MCF 10A (cell line): ENCODE measurements at regions of chr16 and their contacts with region 1.

Region 1: GRCh38 chr16:28549390-28549789 is 4.3 kb upstream of the SGF29 start:
- DNase-seq: peak; percentile 61
- H3K4me3 Mint-ChIP-seq: no peak overlapping the region
- H3K27ac Mint-ChIP-seq: no peak overlapping the region
- H3K4me1 Mint-ChIP-seq: peaks cover 5% of the 10 kb centered on the region
- H3K27me3 Mint-ChIP-seq: no peaks in the 10 kb centered on the region
- CTCF ChIP-seq: peak; percentile 70

Region 2: GRCh38 chr16:28491970-28492474 is 57.4 kb before region 1 on chr16 and contains the start of gene CLN3:
- CTCF ChIA-PET with region 1: interaction called, 7 read pairs
- POLR2A ChIA-PET with region 1: interaction called, 10 read pairs
- intact Hi-C with region 1: no loop called
- DNase-seq: peak; percentile 94
- H3K4me3 Mint-ChIP-seq: peak within 1 kb of the TSS; percentile 91
- H3K27ac Mint-ChIP-seq: peak within 1 kb of the TSS; percentile 100
- H3K4me1 Mint-ChIP-seq: no peaks in the 10 kb centered on the region
- H3K27me3 Mint-ChIP-seq: peaks cover 13% of the 10 kb centered on the region
- CTCF ChIP-seq: no peak
- total RNA-seq, gene CLN3: 18.1 and 19.7 TPM in 2 replicates

Region 3: GRCh38 chr16:28538733-28539596 is 10.4 kb before region 1 on chr16 and contains the start of gene NUPR1:
- CTCF ChIA-PET with region 1: interaction called, 14 read pairs
- POLR2A ChIA-PET with region 1: interaction called, 9 read pairs
- intact Hi-C with region 1: no loop called
- DNase-seq: peak; percentile 99
- H3K4me3 Mint-ChIP-seq: peak within 1 kb of the TSS; percentile 79
- H3K27ac Mint-ChIP-seq: peak within 1 kb of the TSS; percentile 96
- H3K4me1 Mint-ChIP-seq: peaks cover 39% of the 10 kb centered on the region
- H3K27me3 Mint-ChIP-seq: no peaks in the 10 kb centered on the region
- CTCF ChIP-seq: no peak
- total RNA-seq, gene NUPR1: 291 and 345 TPM in 2 replicates

Region 4: DNA sequence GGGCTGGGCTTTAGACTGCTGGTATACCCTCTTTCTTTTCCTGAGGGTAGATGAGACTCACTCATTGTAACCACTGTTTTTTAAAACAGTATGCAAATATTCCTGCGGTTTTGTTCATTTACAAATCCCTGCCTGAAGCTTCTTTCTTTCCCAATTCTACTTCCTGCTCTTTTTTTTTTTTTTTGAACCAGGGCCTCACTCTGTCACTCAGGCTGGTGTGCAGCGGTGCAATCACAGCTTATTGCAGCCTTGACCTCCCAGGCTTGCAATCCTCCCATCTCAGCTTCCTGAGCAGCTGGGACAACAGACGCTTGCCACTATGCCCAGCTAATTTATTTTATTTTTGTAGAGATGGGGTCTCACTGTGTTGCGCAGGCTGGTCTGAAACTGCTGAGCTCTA is 68.5 kb after region 1 on chr16:
- CTCF ChIA-PET with region 1: no interaction called
- POLR2A ChIA-PET with region 1: no interaction called
- intact Hi-C with region 1: loop called (anchors 5 kb)
- DNase-seq: peak; percentile 44
- H3K4me3 Mint-ChIP-seq: no peak overlapping the region
- H3K27ac Mint-ChIP-seq: no peak overlapping the region
- H3K4me1 Mint-ChIP-seq: peaks cover 6% of the 10 kb centered on the region
- H3K27me3 Mint-ChIP-seq: no peaks in the 10 kb centered on the region
- CTCF ChIP-seq: no peak

Region 5: GRCh38 chr16:28859326-28859725 is 309.9 kb after region 1 on chr16:
- CTCF ChIA-PET with region 1: no interaction called
- POLR2A ChIA-PET with region 1: no interaction called
- intact Hi-C with region 1: no loop called
- DNase-seq: no peak
- H3K4me3 Mint-ChIP-seq: no peak overlapping the region
- H3K27ac Mint-ChIP-seq: no peak overlapping the region
- H3K4me1 Mint-ChIP-seq: peaks cover 3% of the 10 kb centered on the region
- H3K27me3 Mint-ChIP-seq: no peaks in the 10 kb centered on the region
- CTCF ChIP-seq: no peak

Region 6: GRCh38 chr16:28879841-28880588 is 330.6 kb after region 1 on chr16:
- CTCF ChIA-PET with region 1: no interaction called
- POLR2A ChIA-PET with region 1: no interaction called
- intact Hi-C with region 1: loop called (anchors 5 kb)
- DNase-seq: peak; percentile 82
- H3K4me3 Mint-ChIP-seq: peak overlapping the region; percentile 79
- H3K27ac Mint-ChIP-seq: no peak overlapping the region
- H3K4me1 Mint-ChIP-seq: no peaks in the 10 kb centered on the region
- H3K27me3 Mint-ChIP-seq: peaks cover 12% of the 10 kb centered on the region
- CTCF ChIP-seq: no peak